Activated B cell treated with CpG ODN at 0.5 μM for 24 hours (primary cell): ENCODE measurements at regions of chr1 and their contacts with region 1.

Region 1: DNA sequence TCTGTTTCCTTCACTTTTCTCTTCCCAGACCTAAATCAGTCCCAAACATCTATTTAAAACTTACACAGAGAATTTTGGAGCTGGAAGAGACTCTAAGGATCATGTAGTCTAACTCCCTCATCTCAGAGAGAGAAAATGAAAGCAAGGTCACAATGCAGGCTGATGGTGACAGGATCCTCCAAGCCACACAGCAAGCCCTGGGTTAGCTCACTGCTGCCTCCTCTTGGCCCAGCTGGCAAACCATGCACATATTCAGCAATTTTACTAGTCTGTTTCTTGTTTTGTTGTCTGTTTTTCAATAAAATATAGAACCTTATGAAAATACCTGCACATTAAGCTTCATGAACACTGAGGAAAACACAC is 27.7 kb upstream of the LY9 start:
- DNase-seq: peak; percentile 49
- ATAC-seq: peak; percentile 90
- H3K4me3 Mint-ChIP-seq: peak overlapping the region; percentile 78
- H3K27ac Mint-ChIP-seq: peak overlapping the region; percentile 87
- H3K4me1 Mint-ChIP-seq: peaks cover 40% of the 10 kb centered on the region
- H3K27me3 Mint-ChIP-seq: no peaks in the 10 kb centered on the region
- CTCF ChIP-seq: peak; percentile 30

Region 2: GRCh38 chr1:160420881-160421842 is 347.1 kb before region 1 on chr1:
- CTCF ChIA-PET with region 1: no interaction called
- POLR2A ChIA-PET with region 1: no interaction called
- intact Hi-C with region 1: no loop called
- DNase-seq: no peak
- ATAC-seq: no peak
- H3K4me3 Mint-ChIP-seq: no peak overlapping the region
- H3K27ac Mint-ChIP-seq: no peak overlapping the region
- H3K4me1 Mint-ChIP-seq: no peaks in the 10 kb centered on the region
- H3K27me3 Mint-ChIP-seq: no peaks in the 10 kb centered on the region
- CTCF ChIP-seq: no peak

Region 3: DNA sequence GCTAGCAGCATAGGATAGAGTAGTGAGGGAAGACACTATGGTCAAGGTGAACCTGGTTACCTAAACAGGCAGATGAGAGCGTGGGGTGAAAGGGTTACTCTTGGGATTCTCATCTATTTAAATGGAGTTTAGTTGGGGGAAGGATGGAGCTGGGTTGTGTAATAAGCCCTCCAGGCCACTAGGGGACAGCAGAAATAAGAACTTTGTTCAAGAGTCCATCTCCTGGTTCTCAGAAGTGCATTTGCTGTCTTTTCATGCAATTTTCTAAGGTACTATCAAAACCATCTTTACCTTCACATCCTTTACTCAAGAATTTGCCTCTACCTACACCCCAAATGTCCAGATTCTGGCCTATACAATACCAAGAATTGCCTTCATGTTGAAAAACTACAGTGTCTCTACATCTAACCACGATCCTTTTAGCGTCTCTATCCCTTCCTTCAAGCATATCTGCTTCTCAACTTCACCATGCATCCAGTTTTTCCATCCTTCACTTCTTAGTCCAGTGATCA is 149.5 kb before region 1 on chr1:
- CTCF ChIA-PET with region 1: no interaction called
- POLR2A ChIA-PET with region 1: no interaction called
- intact Hi-C with region 1: loop called (anchors 5 kb)
- DNase-seq: no peak
- ATAC-seq: no peak
- H3K4me3 Mint-ChIP-seq: no peak overlapping the region
- H3K27ac Mint-ChIP-seq: peak overlapping the region; percentile 5
- H3K4me1 Mint-ChIP-seq: peaks cover 58% of the 10 kb centered on the region
- H3K27me3 Mint-ChIP-seq: no peaks in the 10 kb centered on the region
- CTCF ChIP-seq: no peak

Region 4: DNA sequence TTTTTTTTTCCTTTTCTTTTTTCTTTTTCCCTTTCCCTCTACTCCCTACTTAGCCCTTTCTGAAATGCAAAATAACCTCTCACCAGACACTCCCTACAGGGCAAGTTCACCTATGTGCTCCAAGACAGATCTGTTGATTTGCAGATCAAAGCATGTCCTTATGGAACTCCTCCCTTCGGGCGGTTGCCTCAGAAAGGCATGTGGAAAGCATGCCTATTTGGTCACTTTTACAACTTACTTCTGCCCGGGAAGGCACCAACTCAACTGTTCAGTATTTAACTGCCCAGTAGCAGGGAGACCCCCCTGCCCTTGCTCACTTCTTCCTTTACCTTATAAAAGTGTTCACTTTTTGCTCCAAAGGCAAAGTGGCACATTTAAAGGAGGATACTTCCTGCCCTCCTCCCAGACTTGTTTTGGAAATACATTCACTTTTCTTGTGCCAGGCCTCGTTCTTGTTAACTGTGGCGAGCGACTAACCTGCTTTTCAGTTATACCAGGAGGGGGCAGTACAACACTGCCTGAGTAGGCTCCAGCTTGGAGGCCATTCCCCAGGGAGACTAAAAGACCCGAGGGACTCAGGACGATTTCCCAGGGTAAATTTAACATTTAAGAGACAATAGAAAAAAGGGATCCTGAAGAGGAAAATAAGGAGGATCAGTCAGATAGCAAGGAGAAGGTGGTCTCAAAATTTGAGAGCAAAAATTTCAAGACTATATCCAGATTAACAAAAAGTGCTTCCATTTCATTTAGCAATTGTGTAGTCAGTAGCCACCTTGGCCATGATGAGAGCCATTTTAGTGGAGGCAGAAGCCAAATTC is 41.6 kb before region 1 on chr1:
- CTCF ChIA-PET with region 1: interaction called, 89 read pairs
- POLR2A ChIA-PET with region 1: interaction called, 6 read pairs
- intact Hi-C with region 1: loop called (anchors 1 kb)
- DNase-seq: peak; percentile 32
- ATAC-seq: peak; percentile 88
- H3K4me3 Mint-ChIP-seq: no peak overlapping the region
- H3K27ac Mint-ChIP-seq: no peak overlapping the region
- H3K4me1 Mint-ChIP-seq: peaks cover 10% of the 10 kb centered on the region
- H3K27me3 Mint-ChIP-seq: no peaks in the 10 kb centered on the region
- CTCF ChIP-seq: peak; percentile 83

Region 5: DNA sequence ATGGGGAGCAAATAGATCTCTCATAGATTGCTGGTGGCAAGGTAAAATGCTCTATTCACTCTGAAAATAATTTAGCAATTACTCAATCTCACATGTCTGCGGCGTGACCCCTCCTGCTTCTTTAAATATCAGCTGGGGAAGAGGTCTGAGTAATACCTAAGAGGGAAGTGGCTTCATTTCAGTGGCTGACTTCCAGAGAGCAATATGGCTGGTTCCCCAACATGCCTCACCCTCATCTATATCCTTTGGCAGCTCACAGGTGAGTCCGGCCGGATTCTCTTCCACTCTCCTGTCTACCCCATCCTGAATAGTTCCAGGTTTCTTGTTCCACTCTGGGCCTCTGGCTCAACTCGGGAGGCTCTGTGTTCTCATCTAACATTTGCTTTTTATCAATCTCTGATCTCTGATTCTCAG is 29.2 kb before region 1 on chr1 and contains the start of gene SLAMF7:
- CTCF ChIA-PET with region 1: interaction called, 18 read pairs
- POLR2A ChIA-PET with region 1: interaction called, 8 read pairs
- intact Hi-C with region 1: loop called (anchors 1 kb)
- DNase-seq: peak; percentile 32
- ATAC-seq: peak; percentile 94
- H3K4me3 Mint-ChIP-seq: peak within 1 kb of the TSS; percentile 88
- H3K27ac Mint-ChIP-seq: peak within 1 kb of the TSS; percentile 90
- H3K4me1 Mint-ChIP-seq: peaks cover 72% of the 10 kb centered on the region
- H3K27me3 Mint-ChIP-seq: no peaks in the 10 kb centered on the region
- CTCF ChIP-seq: no peak
- total RNA-seq, gene SLAMF7: 99.2 and 119 TPM in 2 replicates

Region 6: DNA sequence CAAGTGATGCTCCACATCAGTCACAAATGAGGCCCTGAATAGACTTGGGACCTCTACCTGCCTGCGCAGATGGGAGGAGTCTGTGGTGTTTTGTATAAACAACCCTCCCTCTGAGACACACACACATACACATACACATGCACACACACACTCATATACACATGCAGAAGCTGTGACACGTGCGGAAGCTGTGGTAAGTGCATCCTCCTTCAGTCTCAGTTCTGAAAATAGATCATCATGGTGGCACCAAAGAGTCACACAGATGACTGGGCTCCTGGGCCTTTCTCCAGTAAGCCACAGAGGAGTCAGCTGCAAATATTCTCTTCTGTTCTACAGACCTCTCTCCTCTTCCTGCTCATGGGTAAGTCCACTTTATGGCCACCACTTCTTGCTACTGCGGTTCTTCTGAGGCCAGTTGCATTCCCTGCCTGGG is 27.7 kb after region 1 on chr1 and contains the start of gene LY9:
- CTCF ChIA-PET with region 1: interaction called, 8 read pairs
- POLR2A ChIA-PET with region 1: interaction called, 11 read pairs
- intact Hi-C with region 1: loop called (anchors 5 kb)
- DNase-seq: peak; percentile 46
- ATAC-seq: peak; percentile 87
- H3K4me3 Mint-ChIP-seq: peak within 1 kb of the TSS; percentile 95
- H3K27ac Mint-ChIP-seq: peak within 1 kb of the TSS; percentile 99
- H3K4me1 Mint-ChIP-seq: peaks cover 81% of the 10 kb centered on the region
- H3K27me3 Mint-ChIP-seq: no peaks in the 10 kb centered on the region
- CTCF ChIP-seq: no peak
- total RNA-seq, gene LY9: 63.6 and 71.6 TPM in 2 replicates

Region 7: GRCh38 chr1:160821628-160822027 is 53.4 kb after region 1 on chr1:
- CTCF ChIA-PET with region 1: no interaction called
- POLR2A ChIA-PET with region 1: no interaction called
- intact Hi-C with region 1: no loop called
- DNase-seq: no peak
- ATAC-seq: no peak
- H3K4me3 Mint-ChIP-seq: no peak overlapping the region
- H3K27ac Mint-ChIP-seq: peak overlapping the region; percentile 57
- H3K4me1 Mint-ChIP-seq: no peaks in the 10 kb centered on the region
- H3K27me3 Mint-ChIP-seq: no peaks in the 10 kb centered on the region
- CTCF ChIP-seq: no peak

Region 8: DNA sequence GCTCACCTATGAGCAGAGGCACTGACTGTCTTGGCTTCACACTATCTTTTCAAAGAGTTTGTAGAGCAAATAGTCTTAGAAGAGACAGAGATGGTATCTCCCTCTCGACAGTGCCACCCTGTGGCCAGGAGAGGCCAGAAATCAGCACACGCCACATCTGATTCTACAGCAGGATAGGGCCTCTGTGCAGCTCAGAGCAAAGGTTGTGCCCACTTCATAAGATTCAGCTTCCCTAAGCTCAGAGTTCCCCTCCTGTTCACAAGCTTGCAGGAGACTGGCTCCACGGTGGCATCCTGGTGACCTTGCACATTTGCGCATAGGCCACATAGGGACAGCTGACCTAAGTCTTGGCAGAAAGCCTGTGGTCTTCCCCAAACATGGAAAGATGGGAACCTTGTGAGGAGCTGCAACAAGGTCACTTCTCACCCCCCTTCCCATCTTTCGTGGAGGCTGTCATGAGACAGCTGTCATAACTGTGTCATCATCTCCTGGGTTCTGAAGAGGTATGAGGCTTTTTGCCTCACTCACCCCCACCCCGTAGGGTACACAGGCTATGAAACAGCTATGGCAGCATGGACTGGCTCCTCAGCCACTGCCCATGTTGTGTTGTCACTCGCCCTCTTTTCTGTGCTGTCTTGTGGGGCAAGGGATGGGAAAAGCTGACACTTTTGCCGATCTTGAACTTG is 183.3 kb after region 1 on chr1:
- CTCF ChIA-PET with region 1: interaction called, 30 read pairs
- POLR2A ChIA-PET with region 1: no interaction called
- intact Hi-C with region 1: loop called (anchors 1 kb)
- DNase-seq: peak; percentile 46
- ATAC-seq: peak; percentile 89
- H3K4me3 Mint-ChIP-seq: no peak overlapping the region
- H3K27ac Mint-ChIP-seq: no peak overlapping the region
- H3K4me1 Mint-ChIP-seq: peaks cover 7% of the 10 kb centered on the region
- H3K27me3 Mint-ChIP-seq: no peaks in the 10 kb centered on the region
- CTCF ChIP-seq: no peak